ENCODE measurements at regions of chr1 and their contacts with region 1.

Region 1: GRCh38 chr1:11838349-11839272 is 9.0 kb downstream of the NPPA start:
- DNase-seq: peak; percentile 64 to 78
- H3K4me3 ChIP-seq: no peak overlapping the region
- H3K27ac ChIP-seq: no peak overlapping the region
- H3K4me1 ChIP-seq: peaks cover 0 to 14% (median 11%) of the 10 kb centered on the region in 4 donors
- H3K27me3 ChIP-seq: no peaks in the 10 kb centered on the region
- CTCF ChIP-seq: peak; percentile 94 to 100

Region 2: DNA sequence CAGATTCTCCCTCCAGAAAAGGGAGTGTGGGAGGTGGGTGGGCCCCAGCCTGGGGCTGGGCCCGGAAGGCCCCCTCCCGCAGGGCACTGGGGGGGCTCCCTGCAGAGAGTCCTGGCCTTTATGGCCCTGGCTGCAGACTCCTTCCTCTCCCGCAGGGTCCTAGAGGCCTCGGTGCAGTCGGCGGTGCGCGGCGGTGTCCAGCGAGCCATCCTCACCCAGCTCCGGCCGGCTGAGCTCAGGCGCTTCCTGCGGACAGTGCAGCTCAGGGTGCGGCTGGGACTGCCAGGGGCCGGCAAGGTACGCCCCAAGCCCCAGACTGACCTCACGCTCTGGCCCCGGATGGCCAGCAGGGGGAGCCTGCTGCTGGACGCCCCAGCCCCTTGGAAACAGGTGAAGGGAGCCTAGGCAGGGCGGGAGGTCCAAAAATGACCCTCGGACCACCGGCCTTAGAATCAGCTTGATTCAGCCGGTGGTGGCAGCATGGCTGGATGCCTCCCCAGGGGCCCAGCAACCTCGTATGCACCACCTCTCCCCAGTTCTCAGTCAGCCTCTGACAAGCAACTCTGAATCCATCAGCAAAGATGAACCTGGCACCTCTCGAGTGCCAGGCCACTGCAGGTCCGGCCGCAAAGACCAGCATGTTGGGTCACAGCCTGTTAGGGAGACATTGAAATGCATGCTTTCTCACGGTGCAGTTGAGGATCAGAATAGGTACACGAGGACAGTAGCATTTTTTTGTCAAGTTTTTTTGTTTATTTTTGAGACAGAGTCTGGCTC is 53.4 kb before region 1 on chr1:
- intact Hi-C with region 1: no loop called
- DNase-seq: peak; percentile 56 to 82
- H3K4me3 ChIP-seq: peak overlapping the region; percentile 20 to 47
- H3K27ac ChIP-seq: peak overlapping the region; percentile 43 to 47
- H3K4me1 ChIP-seq: peaks cover 9 to 53% (median 48%) of the 10 kb centered on the region in 4 donors
- H3K27me3 ChIP-seq: no peaks in the 10 kb centered on the region
- CTCF ChIP-seq: peak; percentile 78

Region 3: DNA sequence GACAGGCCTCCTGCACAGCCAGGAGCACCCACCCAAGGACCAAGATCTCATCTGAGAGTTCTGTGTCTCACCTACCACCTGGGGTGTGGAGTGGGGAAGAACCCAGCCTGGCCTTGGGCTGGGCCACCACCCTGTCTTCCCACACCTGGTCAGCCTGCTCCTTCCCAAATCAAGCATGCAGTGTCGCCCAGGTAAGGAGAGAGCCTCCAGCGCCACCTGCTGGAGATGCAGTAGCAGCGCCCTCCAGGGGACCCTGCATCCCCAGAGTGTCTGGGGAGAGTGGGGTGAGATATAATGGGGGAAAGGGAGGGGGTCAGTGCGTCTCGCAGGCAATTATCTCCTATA is 55.3 kb after region 1 on chr1:
- intact Hi-C with region 1: loop called (anchors 5 kb)
- DNase-seq: peak in 1 of 2 donors; percentile 39
- H3K4me3 ChIP-seq: no peak overlapping the region
- H3K27ac ChIP-seq: no peak overlapping the region
- H3K4me1 ChIP-seq: no peaks in the 10 kb centered on the region
- H3K27me3 ChIP-seq: peaks cover 0 to 40% of the 10 kb centered on the region in 2 donors
- CTCF ChIP-seq: peak; percentile 70 to 80

Region 4: GRCh38 chr1:11907275-11908094 is 68.9 kb after region 1 on chr1:
- intact Hi-C with region 1: loop called (anchors 5 kb)
- DNase-seq: peak; percentile 92 to 96
- H3K4me3 ChIP-seq: peak overlapping the region; percentile 64 to 65
- H3K27ac ChIP-seq: peak overlapping the region; percentile 92 to 93
- H3K4me1 ChIP-seq: peaks cover 0 to 3% (median 0%) of the 10 kb centered on the region in 4 donors
- H3K27me3 ChIP-seq: no peaks in the 10 kb centered on the region
- CTCF ChIP-seq: peak; percentile 79 to 83

Region 5: GRCh38 chr1:12208764-12209494 is 370.3 kb after region 1 on chr1:
- intact Hi-C with region 1: loop called (anchors 10 kb)
- DNase-seq: peak; percentile 87 to 90
- H3K4me3 ChIP-seq: no peak overlapping the region
- H3K27ac ChIP-seq: no peak overlapping the region
- H3K4me1 ChIP-seq: peaks cover 0 to 9% (median 0%) of the 10 kb centered on the region in 4 donors
- H3K27me3 ChIP-seq: peaks cover 0 to 3% of the 10 kb centered on the region in 2 donors
- CTCF ChIP-seq: peak; percentile 92 to 97

Measured in tibial artery (tissue), 4 donors.